ENCODE measurements at regions of chr15 and their contacts with region 1.

Region 1: DNA sequence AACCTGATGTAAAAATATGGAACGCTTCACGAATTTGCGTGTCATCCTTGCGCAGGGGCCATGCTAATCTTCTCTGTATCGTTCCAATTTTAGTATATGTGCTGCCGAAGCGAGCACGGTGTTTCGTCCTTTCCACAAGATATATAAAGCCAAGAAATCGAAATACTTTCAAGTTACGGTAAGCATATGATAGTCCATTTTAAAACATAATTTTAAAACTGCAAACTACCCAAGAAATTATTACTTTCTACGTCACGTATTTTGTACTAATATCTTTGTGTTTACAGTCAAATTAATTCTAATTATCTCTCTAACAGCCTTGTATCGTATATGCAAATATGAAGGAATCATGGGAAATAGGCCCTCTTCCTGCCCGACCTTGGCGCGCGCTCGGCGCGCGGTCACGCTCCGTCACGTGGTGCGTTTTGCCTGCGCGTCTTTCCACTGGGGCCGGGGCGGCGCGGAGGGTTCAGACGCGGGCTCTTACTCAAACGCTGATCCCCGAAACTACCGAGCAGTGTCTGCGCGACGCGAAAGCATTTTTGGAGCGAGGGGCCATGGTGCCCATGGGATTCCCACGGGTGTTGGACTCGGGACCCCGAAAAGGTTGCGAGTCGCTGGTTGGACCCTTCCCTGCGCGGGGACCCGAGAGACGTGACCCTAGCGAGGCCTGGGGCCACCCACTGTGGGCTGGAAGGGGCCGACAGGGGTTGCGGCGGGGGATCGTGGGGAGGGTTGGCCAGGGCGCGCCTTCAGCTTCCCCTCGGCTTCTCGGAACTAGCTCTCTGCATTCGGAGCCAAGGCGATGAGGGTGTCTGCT is at the start of gene RNU6-1:
- DNase-seq: peak; percentile 92
- H3K4me3 Mint-ChIP-seq: peak within 1 kb of the TSS; percentile 86
- H3K27ac Mint-ChIP-seq: peak within 1 kb of the TSS; percentile 93
- H3K4me1 Mint-ChIP-seq: peaks cover 25% of the 10 kb centered on the region
- H3K27me3 Mint-ChIP-seq: peaks cover 35% of the 10 kb centered on the region
- total RNA-seq, gene RNU6-1: not detected in 2 replicates

Region 2: GRCh38 chr15:66946578-66947164 is 893.5 kb before region 1 on chr15:
- intact Hi-C with region 1: loop called (anchors 5 kb)
- DNase-seq: peak; percentile 63
- H3K4me3 Mint-ChIP-seq: no peak overlapping the region
- H3K27ac Mint-ChIP-seq: no peak overlapping the region
- H3K4me1 Mint-ChIP-seq: peaks cover 6% of the 10 kb centered on the region
- H3K27me3 Mint-ChIP-seq: peaks cover 17% of the 10 kb centered on the region

Region 3: DNA sequence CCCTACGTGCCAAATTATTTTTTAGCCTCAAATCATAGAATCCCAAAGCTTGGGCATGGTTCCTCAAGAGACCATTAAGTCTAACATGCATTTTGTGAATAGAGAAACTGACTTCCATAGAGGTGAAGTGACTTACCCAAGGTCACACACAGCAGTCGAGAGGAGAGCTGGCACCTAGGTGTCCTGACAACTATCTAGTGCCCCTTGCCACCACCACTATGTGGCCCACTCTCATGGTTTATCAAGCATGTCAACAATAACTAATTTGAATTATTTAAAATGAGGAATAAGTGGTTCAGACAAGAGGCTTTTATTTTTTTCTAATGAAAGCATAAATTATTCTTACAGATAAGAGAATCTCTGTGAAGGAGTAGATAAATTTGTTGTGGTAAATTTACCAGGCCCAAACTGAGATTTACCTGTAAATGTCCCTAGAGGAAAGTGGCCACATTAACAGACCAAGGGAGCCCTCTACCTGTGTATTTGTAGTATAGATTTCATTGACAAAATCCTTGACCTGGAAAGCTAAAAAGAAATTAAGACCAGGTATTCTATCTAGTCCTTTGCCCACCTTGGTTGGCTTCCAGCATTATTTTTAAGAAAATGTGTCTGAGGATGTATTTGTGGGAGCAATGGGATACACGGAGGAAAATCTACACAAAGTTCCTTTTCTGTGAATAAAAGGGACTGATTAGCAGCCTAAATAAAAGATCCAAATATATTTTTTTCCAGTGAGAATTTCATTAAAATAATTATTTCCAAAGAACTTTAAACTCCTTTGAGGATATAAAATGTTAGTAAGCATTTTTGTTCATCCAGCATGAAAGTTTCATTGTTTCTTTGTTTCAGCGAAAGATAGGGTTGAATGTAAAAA is 536.4 kb before region 1 on chr15:
- intact Hi-C with region 1: loop called (anchors 10 kb)
- DNase-seq: no peak
- H3K4me3 Mint-ChIP-seq: no peak overlapping the region
- H3K27ac Mint-ChIP-seq: no peak overlapping the region
- H3K4me1 Mint-ChIP-seq: peaks cover 8% of the 10 kb centered on the region
- H3K27me3 Mint-ChIP-seq: peaks cover 32% of the 10 kb centered on the region

Region 4: GRCh38 chr15:67501177-67501835 is 338.8 kb before region 1 on chr15:
- intact Hi-C with region 1: loop called (anchors 5 kb)
- DNase-seq: no peak
- H3K4me3 Mint-ChIP-seq: no peak overlapping the region
- H3K27ac Mint-ChIP-seq: no peak overlapping the region
- H3K4me1 Mint-ChIP-seq: peaks cover 4% of the 10 kb centered on the region
- H3K27me3 Mint-ChIP-seq: peaks cover 7% of the 10 kb centered on the region

Region 5: GRCh38 chr15:68277603-68278344 is 437.6 kb after region 1 on chr15 and contains the start of gene FEM1B:
- intact Hi-C with region 1: loop called (anchors 2 kb)
- DNase-seq: peak; percentile 85
- H3K4me3 Mint-ChIP-seq: peak within 1 kb of the TSS; percentile 100
- H3K27ac Mint-ChIP-seq: peak within 1 kb of the TSS; percentile 96
- H3K4me1 Mint-ChIP-seq: peaks cover 47% of the 10 kb centered on the region
- H3K27me3 Mint-ChIP-seq: no peaks in the 10 kb centered on the region
- total RNA-seq, gene FEM1B: 45.1 and 50.4 TPM in 2 replicates

Region 6: GRCh38 chr15:69320977-69321554 is 1480.9 kb after region 1 on chr15:
- intact Hi-C with region 1: no loop called
- DNase-seq: no peak
- H3K4me3 Mint-ChIP-seq: no peak overlapping the region
- H3K27ac Mint-ChIP-seq: peak overlapping the region; percentile 50
- H3K4me1 Mint-ChIP-seq: peaks cover 21% of the 10 kb centered on the region
- H3K27me3 Mint-ChIP-seq: peaks cover 40% of the 10 kb centered on the region